ENCODE measurements at regions of chr22 and their contacts with region 1.

Region 1: DNA sequence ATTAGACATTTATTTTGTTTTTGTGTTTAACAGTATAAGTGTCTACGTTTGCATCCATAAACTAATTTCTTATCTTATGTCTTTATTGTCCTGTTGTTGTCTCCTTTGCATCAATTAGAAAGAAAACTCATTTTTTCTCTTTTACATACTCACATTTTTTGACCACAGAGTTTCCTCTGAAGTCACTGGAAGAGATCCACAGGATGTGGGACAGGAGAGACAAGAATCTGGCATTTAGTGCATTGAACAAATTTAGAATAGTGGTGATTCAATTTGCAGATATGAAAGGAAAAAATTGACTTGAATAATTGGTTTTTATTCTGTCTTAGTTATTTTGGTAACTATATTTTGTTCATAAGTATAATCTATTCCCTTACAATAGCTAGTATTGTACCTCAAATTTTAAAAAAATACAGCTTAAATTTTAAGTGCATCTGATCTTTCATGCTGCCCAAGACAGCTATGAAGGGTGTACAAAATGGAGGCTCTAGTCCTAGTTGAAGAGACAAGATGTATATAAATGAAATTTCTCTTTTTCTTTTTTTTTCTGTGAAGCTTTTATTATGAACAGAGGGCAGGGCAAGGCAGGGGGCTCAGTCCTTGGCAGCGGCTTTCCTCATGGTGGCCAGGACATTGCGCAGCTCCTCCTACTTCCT is 24.4 kb downstream of the HORMAD2 start:
- DNase-seq: no peak
- H3K4me3 ChIP-seq: no peak overlapping the region
- H3K27ac ChIP-seq: no peak overlapping the region
- H3K4me1 ChIP-seq: no peaks in the 10 kb centered on the region
- H3K27me3 ChIP-seq: no peaks in the 10 kb centered on the region
- CTCF ChIP-seq: no peak

Region 2: DNA sequence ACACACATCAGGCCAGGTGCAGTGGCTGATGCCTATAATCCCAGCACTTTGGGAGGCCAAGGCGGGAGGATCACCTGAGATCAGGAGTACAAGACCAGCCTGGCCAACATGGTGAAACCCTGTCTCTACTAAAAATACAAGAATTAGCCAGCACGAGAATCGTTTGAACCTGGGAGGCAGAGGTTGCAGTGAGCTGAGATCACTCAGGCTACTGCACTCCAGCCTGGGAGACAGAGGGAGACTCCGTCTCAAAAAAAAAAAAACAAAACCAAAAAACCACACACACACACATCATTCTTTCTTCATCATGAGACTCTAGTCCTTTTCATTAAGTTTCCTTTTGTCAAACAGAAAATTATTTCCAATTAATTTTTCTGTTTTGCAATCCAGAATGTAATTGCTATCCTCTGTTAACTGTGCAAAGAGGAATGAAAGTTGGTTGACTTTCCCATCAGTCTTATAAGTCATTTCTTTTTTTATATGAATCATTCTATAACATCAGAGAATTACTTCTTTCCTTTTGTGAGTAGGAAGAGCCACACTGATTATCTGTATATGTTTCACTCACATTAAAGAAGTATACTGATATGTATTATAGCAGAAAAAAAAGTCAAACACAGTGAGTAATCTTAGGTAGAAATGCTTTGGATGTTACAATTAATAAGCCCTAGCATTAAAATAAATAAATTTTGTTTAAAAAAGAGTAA is 27.8 kb after region 1 on chr22:
- CTCF ChIA-PET with region 1: no interaction called
- dilution Hi-C with region 1: no loop called
- in situ Hi-C with region 1: no loop called
- intact Hi-C with region 1: no loop called
- DNase-seq: no peak
- H3K4me3 ChIP-seq: no peak overlapping the region
- H3K27ac ChIP-seq: no peak overlapping the region
- H3K4me1 ChIP-seq: no peaks in the 10 kb centered on the region
- H3K27me3 ChIP-seq: no peaks in the 10 kb centered on the region
- CTCF ChIP-seq: no peak

Region 3: DNA sequence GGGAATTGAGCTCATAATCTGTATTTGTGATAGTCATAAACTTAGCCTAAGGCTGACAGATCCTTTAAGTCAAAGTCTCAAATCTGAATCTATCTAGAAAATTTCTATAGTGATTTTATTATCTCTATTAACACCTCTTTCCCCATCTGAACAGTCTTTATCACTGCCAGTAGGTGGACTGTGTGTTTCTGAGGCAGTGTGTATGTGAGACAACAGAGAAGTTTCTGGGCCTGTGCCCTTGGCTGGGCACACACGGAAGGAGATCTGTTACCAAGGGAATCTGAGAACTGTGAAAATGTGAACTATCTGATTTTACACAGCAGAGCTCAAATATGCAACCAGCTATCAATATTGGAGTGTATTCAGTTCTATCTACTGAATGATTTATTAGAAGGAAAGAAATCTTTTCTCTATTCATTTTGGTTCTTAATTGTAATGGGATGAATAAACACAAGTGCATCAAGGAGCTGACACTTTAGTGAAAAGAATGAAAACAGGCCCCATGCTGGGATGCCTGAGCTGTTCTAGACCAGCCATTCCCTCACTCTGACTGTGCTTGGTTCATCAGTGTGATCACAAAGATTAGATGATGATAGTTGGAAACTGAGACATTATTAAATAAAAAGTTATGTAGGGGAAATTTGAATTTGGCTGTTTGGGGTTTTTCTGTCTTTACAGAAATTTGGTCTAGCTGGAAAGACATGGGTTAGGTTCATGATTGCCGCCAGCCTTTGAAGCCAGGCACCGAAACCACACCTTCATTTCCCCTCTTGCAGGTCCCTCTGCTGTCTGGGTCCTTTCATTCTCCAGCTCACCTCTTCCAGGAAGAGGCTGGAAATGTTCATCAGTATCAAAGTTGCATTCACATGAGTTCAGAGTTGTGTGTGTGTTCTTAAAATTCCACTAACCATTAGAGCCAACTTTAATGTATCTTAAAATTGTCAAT is 73.8 kb after region 1 on chr22:
- CTCF ChIA-PET with region 1: no interaction called
- dilution Hi-C with region 1: no loop called
- in situ Hi-C with region 1: no loop called
- intact Hi-C with region 1: loop called (anchors 2 kb)
- DNase-seq: no peak
- H3K4me3 ChIP-seq: no peak overlapping the region
- H3K27ac ChIP-seq: no peak overlapping the region
- H3K4me1 ChIP-seq: peaks cover 18% of the 10 kb centered on the region
- H3K27me3 ChIP-seq: no peaks in the 10 kb centered on the region
- CTCF ChIP-seq: peak in 1 of 2 donors; percentile 16

Region 4: GRCh38 chr22:30245985-30246901 is 141.6 kb after region 1 on chr22 and contains the start of gene LIF:
- CTCF ChIA-PET with region 1: no interaction called
- dilution Hi-C with region 1: loop called (anchors 5 kb)
- in situ Hi-C with region 1: no loop called
- intact Hi-C with region 1: no loop called
- DNase-seq: peak; percentile 76
- H3K4me3 ChIP-seq: peak within 1 kb of the TSS; percentile 74 to 80 (median 78)
- H3K27ac ChIP-seq: peak within 1 kb of the TSS; percentile 80
- H3K4me1 ChIP-seq: peaks cover 60% of the 10 kb centered on the region
- H3K27me3 ChIP-seq: no peaks in the 10 kb centered on the region
- CTCF ChIP-seq: peak in 1 of 2 donors; percentile 31
- total RNA-seq, gene LIF: 31.2 to 35.8 TPM

Region 5: DNA sequence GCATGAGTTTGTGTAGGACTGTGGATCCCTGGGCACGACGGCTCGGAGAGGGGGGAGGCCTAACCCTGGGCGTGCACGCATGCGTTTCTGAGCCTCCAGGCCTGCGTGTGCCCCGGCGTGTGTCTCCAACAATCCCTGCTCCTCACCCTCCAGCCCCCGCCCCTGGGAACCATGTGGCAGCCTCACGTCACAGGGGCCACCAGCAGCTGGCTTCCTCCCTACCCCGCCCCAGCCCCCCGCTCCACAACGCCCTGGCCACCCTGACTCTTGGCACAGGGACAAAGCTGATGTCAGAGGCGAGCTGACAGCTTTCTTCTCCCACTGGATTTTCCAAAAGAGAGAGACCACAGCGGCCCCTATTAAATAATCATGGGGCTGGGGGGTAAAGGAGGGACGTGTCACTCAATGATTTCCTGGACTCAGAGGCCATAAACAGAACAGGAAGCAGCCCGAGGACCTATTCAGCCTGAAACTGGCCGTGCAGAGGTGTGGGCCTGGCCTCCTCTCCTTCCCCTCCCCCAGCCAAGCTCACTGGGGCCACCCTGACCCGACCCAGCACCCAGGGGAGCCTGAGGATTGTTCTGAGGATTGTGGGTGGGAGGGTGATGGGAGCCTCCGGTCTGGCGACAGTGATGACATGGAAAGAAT is 148.7 kb after region 1 on chr22:
- CTCF ChIA-PET with region 1: no interaction called
- dilution Hi-C with region 1: no loop called
- in situ Hi-C with region 1: no loop called
- intact Hi-C with region 1: loop called (anchors 1 kb)
- DNase-seq: no peak
- H3K4me3 ChIP-seq: no peak overlapping the region
- H3K27ac ChIP-seq: no peak overlapping the region
- H3K4me1 ChIP-seq: peaks cover 44% of the 10 kb centered on the region
- H3K27me3 ChIP-seq: no peaks in the 10 kb centered on the region
- CTCF ChIP-seq: no peak